ENCODE measurements at regions of chr20 and their contacts with region 1.

Region 1: DNA sequence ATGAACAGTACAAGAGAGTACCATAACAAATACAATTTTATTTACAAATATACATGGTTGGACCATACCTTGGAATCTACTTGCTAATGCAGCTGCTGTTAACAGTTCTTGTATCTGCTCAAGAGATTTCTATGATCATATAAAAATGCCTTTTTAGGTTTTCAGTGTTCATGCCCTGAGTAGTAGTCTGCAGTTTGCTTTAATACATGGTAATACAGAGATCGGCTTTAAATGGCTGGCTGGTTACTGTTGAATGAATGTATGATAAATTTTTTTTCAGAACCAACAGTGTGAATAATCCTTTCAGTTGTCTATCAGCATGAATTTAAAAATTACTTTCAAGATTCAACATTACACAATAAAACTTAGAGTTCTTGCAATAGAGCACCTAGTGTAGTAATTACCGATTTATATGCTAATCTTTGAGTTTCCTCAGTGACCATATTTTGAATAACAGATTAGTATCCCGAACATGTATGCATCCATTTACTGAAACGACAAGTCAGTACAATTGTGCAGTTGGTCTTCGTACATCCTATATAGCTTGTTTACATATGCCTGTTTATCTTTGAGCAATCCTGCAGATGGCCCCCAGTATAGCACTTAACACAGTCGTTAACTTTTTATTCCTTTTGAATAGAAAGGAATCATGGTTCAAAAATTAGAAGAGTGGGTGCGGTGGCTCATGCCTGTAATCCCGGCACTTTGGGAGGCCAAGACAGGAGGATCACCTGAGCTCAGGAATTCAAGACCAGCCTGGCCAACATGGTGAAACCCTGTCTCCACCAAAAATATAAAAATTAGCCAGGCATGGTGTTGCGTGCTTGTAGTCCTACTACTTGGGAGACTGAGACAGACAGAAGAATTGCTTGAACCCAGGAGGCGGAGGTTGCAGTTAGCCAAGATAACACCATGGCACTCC is 6.4 kb downstream of the SRSF6 start:
- DNase-seq: no peak
- ATAC-seq: no peak
- H3K4me3 ChIP-seq: no peak overlapping the region
- H3K27ac ChIP-seq: no peak overlapping the region
- H3K4me1 ChIP-seq: peaks cover 0 to under 1% of the 10 kb centered on the region in 2 donors
- H3K27me3 ChIP-seq: no peaks in the 10 kb centered on the region

Region 2: GRCh38 chr20:43271980-43272379 is 192.1 kb before region 1 on chr20:
- intact Hi-C with region 1: no loop called
- DNase-seq: no peak
- ATAC-seq: no peak
- H3K4me3 ChIP-seq: no peak overlapping the region
- H3K27ac ChIP-seq: no peak overlapping the region
- H3K4me1 ChIP-seq: no peaks in the 10 kb centered on the region
- H3K27me3 ChIP-seq: no peaks in the 10 kb centered on the region

Region 3: DNA sequence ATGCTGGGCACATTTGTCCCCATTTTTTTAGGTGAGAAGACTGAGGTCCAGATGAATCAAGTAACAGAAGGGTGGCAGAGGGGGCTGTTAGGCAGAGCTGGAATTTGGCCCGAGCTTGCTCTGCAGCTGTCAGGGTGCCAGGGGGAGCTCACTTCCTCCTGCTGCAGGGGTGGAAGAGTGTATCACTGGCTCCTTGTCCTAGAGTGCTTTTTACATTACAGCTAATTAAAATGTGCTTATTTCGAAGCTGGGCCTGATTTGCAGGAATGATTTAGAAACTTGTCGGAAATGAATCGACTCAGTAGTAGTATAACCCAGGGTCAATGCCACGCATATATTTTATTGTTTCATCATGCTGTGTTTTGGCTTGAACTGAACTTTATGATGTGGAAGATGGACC is 461.7 kb after region 1 on chr20:
- intact Hi-C with region 1: loop called in 1 of 2 experiments (anchors 10 kb)
- DNase-seq: peak; percentile 71 to 72
- ATAC-seq: no peak
- H3K4me3 ChIP-seq: no peak overlapping the region
- H3K27ac ChIP-seq: no peak overlapping the region
- H3K4me1 ChIP-seq: no peaks in the 10 kb centered on the region
- H3K27me3 ChIP-seq: no peaks in the 10 kb centered on the region

Measured in aorta (tissue), 5 donors.